Aorta (tissue), 5 donors: ENCODE measurements at regions of chr3 and their contacts with region 1.

Region 1: DNA sequence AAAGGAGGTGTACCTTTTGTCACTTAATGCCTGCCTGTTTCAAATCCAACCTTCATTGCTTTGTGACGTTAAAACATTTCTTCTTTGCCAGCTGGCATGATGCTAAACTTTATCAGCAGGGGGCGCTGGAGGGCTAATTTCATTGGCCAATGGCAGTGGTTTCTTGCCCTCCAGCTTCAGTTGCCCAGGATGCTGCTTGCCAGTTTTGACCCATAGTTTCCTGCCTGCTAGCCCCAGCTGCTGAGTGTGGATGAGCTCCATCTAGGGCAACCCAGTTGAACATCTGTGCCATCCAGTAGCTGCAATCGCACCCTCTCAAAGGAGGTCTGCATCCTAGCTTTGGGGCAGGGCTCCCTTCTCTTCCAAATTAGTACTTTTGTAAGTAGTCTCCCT is 22.1 kb downstream of the ACKR2 start:
- DNase-seq: peak; percentile 85
- ATAC-seq: peak; percentile 82
- H3K4me3 ChIP-seq: no peak overlapping the region
- H3K27ac ChIP-seq: no peak overlapping the region
- H3K4me1 ChIP-seq: no peaks in the 10 kb centered on the region
- H3K27me3 ChIP-seq: peaks cover 0 to 2% of the 10 kb centered on the region in 2 donors

Region 2: GRCh38 chr3:42880601-42881451 is 49.5 kb after region 1 on chr3:
- intact Hi-C with region 1: loop called (anchors 2 to 5 kb)
- DNase-seq: peak; percentile 91 to 94
- ATAC-seq: peak; percentile 98
- H3K4me3 ChIP-seq: peak overlapping the region; percentile 58 to 70
- H3K27ac ChIP-seq: no peak overlapping the region
- H3K4me1 ChIP-seq: no peaks in the 10 kb centered on the region
- H3K27me3 ChIP-seq: no peaks in the 10 kb centered on the region

Region 3: GRCh38 chr3:42926310-42926709 is 95.0 kb after region 1 on chr3:
- intact Hi-C with region 1: no loop called
- DNase-seq: no peak
- ATAC-seq: no peak
- H3K4me3 ChIP-seq: no peak overlapping the region
- H3K27ac ChIP-seq: no peak overlapping the region
- H3K4me1 ChIP-seq: no peaks in the 10 kb centered on the region
- H3K27me3 ChIP-seq: no peaks in the 10 kb centered on the region